Endothelial cell of umbilical vein (primary cell): ENCODE measurements at regions of chr2 and their contacts with region 1.

Region 1: DNA sequence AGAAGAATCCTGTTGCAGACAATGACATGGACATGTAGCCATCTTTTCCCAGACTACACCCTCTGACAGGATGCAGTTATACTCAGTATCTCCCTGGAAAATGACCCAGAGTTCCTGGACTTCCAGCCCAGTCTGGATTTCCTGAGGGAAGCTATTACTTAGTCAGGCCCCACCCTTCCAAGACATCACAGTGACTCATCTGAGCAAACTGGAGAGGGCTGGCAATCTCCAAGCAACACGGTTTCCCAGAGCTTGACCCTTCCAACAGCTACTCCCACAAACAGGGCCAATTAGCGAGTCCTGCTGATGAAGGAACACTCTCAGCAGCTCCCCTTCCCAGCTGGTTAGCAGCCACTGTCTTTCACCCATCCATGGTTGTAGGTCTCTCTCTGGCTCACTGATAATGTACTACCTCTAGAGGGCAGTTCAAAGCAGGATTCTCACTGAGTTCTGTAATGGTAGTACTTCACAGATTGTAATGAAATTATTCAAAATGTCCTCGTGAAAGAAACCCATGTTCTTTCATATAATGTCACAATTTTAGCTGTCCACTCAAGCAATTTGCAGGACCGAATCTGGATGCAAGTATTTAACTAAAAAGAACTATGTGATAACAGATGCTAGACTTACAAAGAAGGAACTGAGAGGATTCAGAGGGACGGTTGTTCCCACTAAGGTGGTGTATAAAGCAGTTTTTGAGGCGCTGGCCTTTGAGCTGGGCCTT is 110.2 kb downstream of the MDH1 start:
- DNase-seq: peak; percentile 93
- H3K4me3 ChIP-seq: no peak overlapping the region
- H3K27ac ChIP-seq: peak overlapping the region; percentile 48
- H3K4me1 ChIP-seq: peaks cover 16% of the 10 kb centered on the region
- H3K27me3 ChIP-seq: no peaks in the 10 kb centered on the region
- CTCF ChIP-seq: peak; percentile 44 to 50
- POLR2A ChIP-seq: peak; percentile 72

Region 2: DNA sequence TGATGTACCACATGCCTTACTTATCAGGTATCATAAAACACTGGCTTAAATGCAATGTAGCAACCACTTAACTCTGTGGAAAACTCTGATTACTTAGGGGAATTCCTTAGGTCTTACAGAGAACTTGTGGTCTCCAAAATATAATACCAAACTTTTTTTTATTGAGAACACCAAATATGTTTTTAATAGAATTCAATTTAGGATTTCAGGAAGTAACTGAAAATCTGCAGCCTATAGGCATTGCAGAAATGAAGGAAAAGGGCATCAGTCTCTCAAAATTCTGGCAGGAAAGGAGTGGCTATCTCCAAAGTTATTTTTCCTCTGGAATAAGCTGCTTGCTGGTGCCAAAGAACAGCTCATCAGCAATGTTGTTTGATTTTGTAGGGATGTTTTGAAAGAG is 37.4 kb after region 1 on chr2:
- CTCF ChIA-PET with region 1: interaction called, 18 read pairs
- POLR2A ChIA-PET with region 1: no interaction called
- dilution Hi-C with region 1: no loop called
- intact Hi-C with region 1: loop called (anchors 2 kb)
- DNase-seq: peak; percentile 67
- H3K4me3 ChIP-seq: no peak overlapping the region
- H3K27ac ChIP-seq: peak overlapping the region; percentile 48
- H3K4me1 ChIP-seq: peaks cover 38% of the 10 kb centered on the region
- H3K27me3 ChIP-seq: no peaks in the 10 kb centered on the region
- CTCF ChIP-seq: no peak
- POLR2A ChIP-seq: no peak

Region 3: DNA sequence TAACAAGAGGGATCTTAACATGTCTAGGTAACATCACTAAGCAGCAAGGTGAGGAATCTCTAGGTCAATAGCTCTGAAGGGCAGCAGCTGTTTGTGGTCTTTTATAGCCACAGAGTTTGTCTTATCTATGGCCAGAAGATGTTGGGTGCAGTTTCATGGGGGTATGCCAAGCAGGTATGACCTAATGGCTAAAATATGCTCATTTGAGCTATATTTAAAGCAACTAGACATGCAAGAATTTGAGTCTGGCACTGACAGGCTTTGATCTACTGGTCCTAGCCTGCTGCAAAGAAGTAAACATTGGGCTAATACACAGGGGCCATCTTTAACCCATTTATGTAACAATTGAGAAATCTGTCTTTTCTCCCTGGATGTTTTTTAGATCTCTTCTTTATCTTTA is 128.8 kb after region 1 on chr2:
- CTCF ChIA-PET with region 1: interaction called, 10 read pairs
- POLR2A ChIA-PET with region 1: no interaction called
- dilution Hi-C with region 1: no loop called
- intact Hi-C with region 1: no loop called
- DNase-seq: peak; percentile 18
- H3K4me3 ChIP-seq: no peak overlapping the region
- H3K27ac ChIP-seq: no peak overlapping the region
- H3K4me1 ChIP-seq: peaks cover 3% of the 10 kb centered on the region
- H3K27me3 ChIP-seq: no peaks in the 10 kb centered on the region
- CTCF ChIP-seq: no peak
- POLR2A ChIP-seq: no peak

Region 4: GRCh38 chr2:63841254-63842022 is 142.5 kb after region 1 on chr2 and contains the start of gene UGP2:
- CTCF ChIA-PET with region 1: interaction called, 36 read pairs
- POLR2A ChIA-PET with region 1: interaction called, 8 read pairs
- dilution Hi-C with region 1: no loop called
- intact Hi-C with region 1: loop called (anchors 1 kb)
- DNase-seq: peak; percentile 92
- H3K4me3 ChIP-seq: peak within 1 kb of the TSS; percentile 91 to 96 (median 95)
- H3K27ac ChIP-seq: peak within 1 kb of the TSS; percentile 81
- H3K4me1 ChIP-seq: peaks cover 16% of the 10 kb centered on the region
- H3K27me3 ChIP-seq: no peaks in the 10 kb centered on the region
- CTCF ChIP-seq: peak in 1 of 2 donors; percentile 26
- POLR2A ChIP-seq: peak; percentile 84
- total RNA-seq, gene UGP2: 57.7 and 63.9 TPM in 2 replicates

Region 5: GRCh38 chr2:63849381-63850203 is 150.6 kb after region 1 on chr2:
- CTCF ChIA-PET with region 1: interaction called, 11 read pairs
- POLR2A ChIA-PET with region 1: no interaction called
- dilution Hi-C with region 1: no loop called
- intact Hi-C with region 1: no loop called
- DNase-seq: no peak
- H3K4me3 ChIP-seq: no peak overlapping the region
- H3K27ac ChIP-seq: no peak overlapping the region
- H3K4me1 ChIP-seq: no peaks in the 10 kb centered on the region
- H3K27me3 ChIP-seq: no peaks in the 10 kb centered on the region
- CTCF ChIP-seq: no peak
- POLR2A ChIP-seq: no peak

Region 6: DNA sequence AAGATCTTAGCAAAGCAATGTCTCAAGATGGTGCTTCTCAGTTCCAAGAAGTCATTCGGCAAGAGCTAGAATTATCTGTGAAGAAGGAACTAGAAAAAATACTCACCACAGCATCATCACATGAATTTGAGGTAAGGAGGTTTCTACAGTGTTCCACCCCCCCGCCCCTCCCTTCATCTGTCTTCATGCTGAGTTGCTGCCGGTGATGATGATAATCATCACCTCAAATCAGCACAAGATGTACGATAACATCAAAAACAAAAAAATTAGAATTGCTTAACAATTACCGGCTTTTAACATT is 157.3 kb after region 1 on chr2:
- CTCF ChIA-PET with region 1: interaction called, 178 read pairs
- POLR2A ChIA-PET with region 1: no interaction called
- dilution Hi-C with region 1: no loop called
- intact Hi-C with region 1: no loop called
- DNase-seq: no peak
- H3K4me3 ChIP-seq: no peak overlapping the region
- H3K27ac ChIP-seq: no peak overlapping the region
- H3K4me1 ChIP-seq: no peaks in the 10 kb centered on the region
- H3K27me3 ChIP-seq: no peaks in the 10 kb centered on the region
- CTCF ChIP-seq: no peak
- POLR2A ChIP-seq: no peak

Region 7: DNA sequence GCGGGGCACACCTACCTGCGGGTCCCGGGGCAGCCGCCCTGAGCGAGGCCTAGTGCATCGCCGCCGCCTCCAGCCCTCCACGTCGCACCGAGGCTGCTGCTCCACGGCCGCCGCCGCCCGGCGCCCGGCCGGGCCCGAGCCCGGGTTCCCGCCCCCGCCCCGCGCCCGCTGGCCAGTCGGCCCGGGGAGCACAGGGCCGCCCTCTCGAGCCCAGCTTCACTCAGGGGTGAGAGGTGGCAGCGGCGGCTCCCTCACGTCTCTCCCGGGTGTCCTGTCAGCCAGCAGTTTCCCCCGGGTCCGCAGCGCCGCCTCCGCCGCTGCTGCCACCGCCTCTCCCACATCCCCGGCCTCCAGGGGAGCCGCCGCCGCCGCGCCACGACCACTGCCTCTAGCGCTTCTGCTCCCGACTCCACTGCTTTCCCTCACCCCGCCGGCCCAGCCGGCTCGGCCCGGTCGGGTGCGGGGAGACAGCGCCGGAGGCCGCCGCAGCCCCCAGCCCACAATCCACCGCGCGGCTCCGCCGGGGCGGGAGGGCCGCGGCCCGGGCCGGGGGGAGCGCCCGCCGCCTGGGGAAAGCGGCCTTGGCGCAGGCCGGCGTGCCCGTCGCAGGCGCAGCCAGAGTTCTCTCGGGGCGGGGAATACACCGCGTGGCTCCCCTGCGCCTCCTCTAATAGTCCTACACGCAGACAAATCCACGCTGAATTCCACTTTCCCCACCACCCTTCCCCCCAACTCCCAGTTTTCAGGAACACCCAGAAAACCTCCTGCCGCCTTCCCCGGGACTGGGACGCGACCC is 320.1 kb after region 1 on chr2 and contains the start of gene VPS54:
- CTCF ChIA-PET with region 1: no interaction called
- POLR2A ChIA-PET with region 1: no interaction called
- dilution Hi-C with region 1: no loop called
- intact Hi-C with region 1: loop called (anchors 10 kb)
- DNase-seq: peak; percentile 50
- H3K4me3 ChIP-seq: peak within 1 kb of the TSS; percentile 67 to 92 (median 90)
- H3K27ac ChIP-seq: peak within 1 kb of the TSS; percentile 63
- H3K4me1 ChIP-seq: peaks cover 22% of the 10 kb centered on the region
- H3K27me3 ChIP-seq: no peaks in the 10 kb centered on the region
- CTCF ChIP-seq: no peak
- POLR2A ChIP-seq: peak; percentile 47
- total RNA-seq, gene VPS54: 17.6 and 17.7 TPM in 2 replicates